ENCODE measurements at regions of chr5 and their contacts with region 1.

Region 1: DNA sequence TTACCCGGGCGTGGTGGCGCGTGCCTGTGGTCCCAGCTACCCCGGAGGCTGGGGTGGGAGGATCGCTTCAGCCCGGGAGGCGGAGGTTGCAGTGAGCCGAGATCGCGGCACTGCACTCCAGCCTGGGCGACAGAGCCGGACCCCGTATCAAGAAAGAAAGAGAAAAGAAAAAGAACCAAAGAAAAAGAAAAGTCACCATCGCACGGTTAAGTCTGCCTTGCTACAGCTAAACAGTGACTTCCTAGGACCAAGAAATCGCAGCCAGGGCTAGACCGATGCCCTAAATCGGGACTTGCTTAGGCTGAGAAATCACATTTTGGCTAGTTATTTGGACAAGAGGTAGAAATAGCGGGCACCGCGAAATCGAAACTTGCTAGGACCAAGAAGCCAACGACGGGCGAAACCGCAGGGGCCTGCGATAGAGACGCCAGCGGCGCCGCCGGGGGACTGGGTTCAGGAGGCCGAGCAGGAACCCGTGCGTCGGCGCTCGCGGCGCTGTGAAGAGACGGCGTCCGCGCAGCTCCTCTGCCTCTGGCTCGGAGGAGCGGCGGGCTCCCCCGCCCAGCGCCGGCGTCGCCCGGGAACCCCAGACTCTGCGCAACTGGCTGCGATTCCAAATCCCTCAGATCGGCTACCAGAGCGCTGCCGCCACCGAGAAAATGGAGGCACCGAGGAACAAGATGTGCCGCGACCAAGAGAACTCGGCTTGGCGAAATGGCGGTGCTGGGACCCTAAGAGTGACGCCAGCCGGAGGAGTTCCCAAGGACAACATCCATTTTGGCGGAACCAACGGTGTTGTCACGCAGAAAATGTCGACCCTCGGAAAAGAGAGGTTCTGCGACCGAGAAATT is 26.1 kb upstream of the ANXA2R start:
- DNase-seq: peak; percentile 44
- H3K27ac ChIP-seq: peak overlapping the region; percentile 98
- CTCF ChIP-seq: no peak

Region 2: GRCh38 chr5:43042176-43042625 is 24.0 kb before region 1 on chr5:
- CTCF ChIA-PET with region 1: interaction called, 11 read pairs
- POLR2A ChIA-PET with region 1: interaction called, 7 read pairs
- DNase-seq: no peak
- H3K27ac ChIP-seq: peak overlapping the region; percentile 97
- CTCF ChIP-seq: peak; percentile 44

Measured in RWPE1 (cell line).